ENCODE measurements at regions of chr3 and their contacts with region 1.

Region 1: GRCh38 chr3:33980252-33980651 is 181.8 kb downstream of the PDCD6IP start:
- DNase-seq: peak; percentile 85
- ATAC-seq: peak; percentile 82
- H3K4me3 ChIP-seq: no peak overlapping the region
- H3K27ac ChIP-seq: no peak overlapping the region
- H3K4me1 ChIP-seq: peaks cover 2% of the 10 kb centered on the region; the same call in 1 of the 2 replicates
- H3K27me3 ChIP-seq: no peaks in the 10 kb centered on the region
- CTCF ChIP-seq: peak; percentile 71
- POLR2A ChIP-seq: no peak
- RAD21 ChIP-seq: peak; percentile 80

Region 2: DNA sequence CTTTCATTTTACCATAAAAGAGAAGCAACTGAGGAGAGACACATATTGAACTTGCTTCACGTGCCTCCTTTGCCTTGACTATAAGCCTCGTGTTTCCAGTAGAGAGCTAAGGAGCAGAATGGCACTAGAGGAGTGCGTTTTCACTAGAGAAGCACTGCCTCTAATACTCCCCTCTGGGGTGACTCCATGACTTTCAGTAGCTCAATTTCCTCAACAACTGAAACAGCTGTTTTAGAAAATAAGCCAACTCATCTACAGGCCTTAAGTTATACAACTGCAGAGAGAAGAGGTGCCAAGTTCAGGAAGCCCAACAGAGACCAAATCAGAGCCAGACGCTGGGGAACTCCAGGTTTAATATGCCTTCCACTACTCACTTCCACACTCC is 542.0 kb before region 1 on chr3:
- CTCF ChIA-PET with region 1: no interaction called
- POLR2A ChIA-PET with region 1: no interaction called
- dilution Hi-C with region 1: no loop called
- in situ Hi-C with region 1: no loop called
- intact Hi-C with region 1: no loop called
- DNase-seq: peak; percentile 66
- ATAC-seq: no peak
- H3K4me3 ChIP-seq: peak overlapping the region; percentile 73
- H3K27ac ChIP-seq: peak overlapping the region; percentile 18; the same call in 1 of the 2 replicates
- H3K4me1 ChIP-seq: peaks cover 5% of the 10 kb centered on the region
- H3K27me3 ChIP-seq: no peaks in the 10 kb centered on the region
- CTCF ChIP-seq: no peak
- POLR2A ChIP-seq: no peak
- RAD21 ChIP-seq: no peak

Region 3: GRCh38 chr3:33883538-33883950 is 96.7 kb before region 1 on chr3:
- CTCF ChIA-PET with region 1: interaction called, 3 read pairs
- POLR2A ChIA-PET with region 1: no interaction called
- dilution Hi-C with region 1: no loop called
- in situ Hi-C with region 1: no loop called
- intact Hi-C with region 1: loop called (anchors 5 kb)
- DNase-seq: peak; percentile 49
- ATAC-seq: peak; percentile 63
- H3K4me3 ChIP-seq: no peak overlapping the region
- H3K27ac ChIP-seq: no peak overlapping the region
- H3K4me1 ChIP-seq: peaks cover 3% of the 10 kb centered on the region; the same call in 1 of the 2 replicates
- H3K27me3 ChIP-seq: peaks cover 5% of the 10 kb centered on the region; the same call in 1 of the 2 replicates
- CTCF ChIP-seq: peak; percentile 86
- POLR2A ChIP-seq: no peak
- RAD21 ChIP-seq: peak; percentile 79

Region 4: DNA sequence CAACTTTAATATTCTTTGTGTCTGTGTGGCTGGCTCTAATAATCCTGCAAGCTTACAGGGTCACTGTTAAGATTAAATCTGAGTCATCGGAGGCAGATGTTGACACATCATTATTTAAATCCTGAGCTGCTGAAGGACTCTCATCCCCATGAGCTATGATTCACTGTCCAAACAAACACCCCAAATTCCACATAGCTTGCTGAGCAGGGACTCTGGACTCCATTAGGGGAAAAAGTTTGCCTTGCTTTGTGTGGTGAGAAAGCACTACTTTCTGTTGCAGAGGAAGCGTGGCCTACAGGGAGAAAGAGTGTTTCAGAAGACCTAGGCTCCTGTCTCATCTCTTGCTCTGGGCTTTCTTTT is 31.8 kb after region 1 on chr3:
- CTCF ChIA-PET with region 1: interaction called, 8 read pairs
- POLR2A ChIA-PET with region 1: no interaction called
- dilution Hi-C with region 1: no loop called
- in situ Hi-C with region 1: no loop called
- intact Hi-C with region 1: loop called (anchors 1 kb)
- DNase-seq: peak; percentile 100
- ATAC-seq: peak; percentile 89
- H3K4me3 ChIP-seq: no peak overlapping the region
- H3K27ac ChIP-seq: peak overlapping the region; percentile 73; the same call in 1 of the 2 replicates
- H3K4me1 ChIP-seq: peaks cover 28% of the 10 kb centered on the region
- H3K27me3 ChIP-seq: no peaks in the 10 kb centered on the region
- CTCF ChIP-seq: no peak
- POLR2A ChIP-seq: no peak
- RAD21 ChIP-seq: peak; percentile 13; the same call in 1 of the 2 replicates

Region 5: DNA sequence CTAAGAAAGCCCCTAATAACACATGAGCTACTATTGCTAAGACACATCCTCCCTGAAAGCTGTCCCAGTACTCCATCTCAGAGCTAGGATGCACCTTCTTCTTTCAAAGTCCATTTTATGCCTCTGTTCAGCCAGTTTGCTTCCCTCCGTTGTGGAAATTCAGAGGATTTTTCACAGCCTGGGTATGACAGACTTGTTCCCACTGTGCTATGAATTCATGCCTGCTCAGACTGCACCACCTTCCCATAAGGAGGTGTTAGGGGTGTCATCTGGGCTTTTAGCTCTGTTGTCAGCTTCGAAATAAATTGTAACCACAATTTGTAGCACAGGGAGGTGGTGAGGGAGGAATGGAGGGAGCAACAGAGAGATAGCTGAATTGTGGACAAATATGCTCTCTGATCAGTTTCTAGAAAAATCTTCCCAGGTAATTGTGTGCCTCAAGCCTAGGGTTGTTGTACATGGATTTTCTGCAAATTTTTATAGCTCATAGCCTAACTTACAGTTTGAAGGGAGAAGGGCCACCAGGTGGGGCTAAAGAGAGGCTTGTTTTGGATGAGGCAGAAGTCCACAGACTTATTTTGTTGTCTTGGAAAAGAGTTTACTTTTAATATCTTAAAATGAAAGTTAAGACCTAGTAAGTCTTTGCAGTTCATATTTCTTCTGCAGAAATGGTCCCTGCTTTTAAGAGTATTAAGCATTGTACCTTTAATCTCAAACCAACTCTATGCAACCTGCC is 280.2 kb after region 1 on chr3:
- CTCF ChIA-PET with region 1: no interaction called
- POLR2A ChIA-PET with region 1: no interaction called
- dilution Hi-C with region 1: no loop called
- in situ Hi-C with region 1: no loop called
- intact Hi-C with region 1: loop called (anchors 2 kb)
- DNase-seq: peak; percentile 50
- ATAC-seq: peak; percentile 82
- H3K4me3 ChIP-seq: no peak overlapping the region
- H3K27ac ChIP-seq: no peak overlapping the region
- H3K4me1 ChIP-seq: no peaks in the 10 kb centered on the region
- H3K27me3 ChIP-seq: no peaks in the 10 kb centered on the region
- CTCF ChIP-seq: peak; percentile 57
- POLR2A ChIP-seq: no peak
- RAD21 ChIP-seq: peak; percentile 43

Region 6: DNA sequence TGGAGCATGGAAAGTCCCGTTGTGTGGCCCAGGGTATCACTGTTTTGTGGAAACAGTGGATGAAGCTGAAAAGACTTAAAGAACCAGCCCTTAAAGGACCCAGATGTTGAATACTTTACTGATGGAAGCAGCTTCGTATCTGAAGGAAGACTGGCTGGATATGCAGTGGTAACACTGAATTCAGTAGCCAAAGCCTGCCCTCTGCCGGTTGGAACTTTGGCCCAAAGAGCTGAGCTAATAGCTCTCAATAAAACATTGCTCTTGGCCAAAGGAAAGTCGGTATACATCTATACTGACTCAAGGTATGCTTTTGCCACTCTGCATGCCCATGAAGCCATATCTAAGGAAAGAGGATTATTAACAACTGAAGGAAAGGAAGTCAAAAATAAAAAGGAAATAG is 703.6 kb after region 1 on chr3:
- CTCF ChIA-PET with region 1: interaction called, 3 read pairs
- POLR2A ChIA-PET with region 1: no interaction called
- dilution Hi-C with region 1: no loop called
- in situ Hi-C with region 1: no loop called
- intact Hi-C with region 1: loop called (anchors 1 kb)
- DNase-seq: peak; percentile 11
- ATAC-seq: peak; percentile 35; the same call in 1 of the 2 replicates
- H3K4me3 ChIP-seq: no peak overlapping the region
- H3K27ac ChIP-seq: no peak overlapping the region
- H3K4me1 ChIP-seq: no peaks in the 10 kb centered on the region
- H3K27me3 ChIP-seq: no peaks in the 10 kb centered on the region
- CTCF ChIP-seq: peak; percentile 47
- POLR2A ChIP-seq: no peak
- RAD21 ChIP-seq: peak; percentile 49

Region 7: DNA sequence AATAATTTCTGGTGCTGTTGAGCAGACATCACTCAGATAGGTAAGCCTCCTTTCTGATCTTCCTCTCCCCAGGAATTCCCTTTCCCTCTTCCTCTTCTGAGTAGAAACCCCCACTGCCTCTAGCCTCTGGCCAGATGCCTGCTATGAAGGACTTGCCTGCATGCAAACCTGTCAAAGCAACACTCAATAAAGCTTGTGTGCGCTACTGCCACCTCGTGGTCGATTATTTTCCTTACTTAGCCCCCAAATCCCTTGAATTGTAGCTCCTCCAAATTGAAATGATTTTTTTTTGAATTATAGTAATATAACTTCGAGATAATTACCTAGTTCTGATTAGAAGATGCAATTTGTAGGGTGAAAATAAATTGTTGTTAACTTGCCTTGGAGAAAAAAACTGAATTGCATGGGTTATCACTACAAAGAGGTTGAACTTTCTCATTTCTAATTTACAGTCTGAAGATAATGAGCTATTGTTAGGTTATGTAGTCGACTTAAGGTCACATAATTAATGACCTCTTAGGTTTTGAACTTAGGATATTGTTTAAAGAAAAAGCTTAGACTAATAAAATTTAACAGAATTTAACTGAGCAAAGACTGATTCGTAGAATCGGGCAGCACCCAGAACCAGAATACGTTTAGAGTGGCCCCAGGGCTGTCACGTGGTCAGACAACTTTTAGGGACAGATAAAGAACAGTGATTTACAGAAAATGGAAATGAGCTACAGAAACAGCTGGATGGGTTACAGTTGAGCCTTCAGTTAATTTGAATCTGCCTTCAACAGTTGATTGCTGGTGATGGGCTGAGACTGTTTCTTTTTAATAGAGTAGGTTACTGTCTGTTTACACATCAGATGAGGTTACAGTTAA is 1928.3 kb after region 1 on chr3:
- CTCF ChIA-PET with region 1: no interaction called
- POLR2A ChIA-PET with region 1: no interaction called
- dilution Hi-C with region 1: no loop called
- in situ Hi-C with region 1: no loop called
- intact Hi-C with region 1: loop called (anchors 5 kb)
- DNase-seq: peak; percentile 70
- ATAC-seq: peak; percentile 72
- H3K4me3 ChIP-seq: no peak overlapping the region
- H3K27ac ChIP-seq: no peak overlapping the region
- H3K4me1 ChIP-seq: no peaks in the 10 kb centered on the region
- H3K27me3 ChIP-seq: no peaks in the 10 kb centered on the region
- CTCF ChIP-seq: peak; percentile 61
- POLR2A ChIP-seq: no peak
- RAD21 ChIP-seq: peak; percentile 55

Measured in IMR-90 (cell line).